ENCODE measurements at regions of chr5 and their contacts with region 1.

Region 1: GRCh38 chr5:13976867-13977830 is 32.7 kb upstream of the DNAH5 start:
- DNase-seq: peak; percentile 91
- ATAC-seq: peak; percentile 95
- H3K4me3 ChIP-seq: no peak overlapping the region
- H3K27ac ChIP-seq: no peak overlapping the region
- H3K4me1 ChIP-seq: peaks cover 5% of the 10 kb centered on the region
- H3K27me3 ChIP-seq: no peaks in the 10 kb centered on the region
- CTCF ChIP-seq: peak; percentile 91

Region 2: GRCh38 chr5:14351845-14352712 is 374.9 kb after region 1 on chr5:
- CTCF ChIA-PET with region 1: no interaction called
- POLR2A ChIA-PET with region 1: no interaction called
- intact Hi-C with region 1: loop called (anchors 5 kb)
- DNase-seq: peak; percentile 80
- ATAC-seq: peak; percentile 96
- H3K4me3 ChIP-seq: no peak overlapping the region
- H3K27ac ChIP-seq: no peak overlapping the region
- H3K4me1 ChIP-seq: no peaks in the 10 kb centered on the region
- H3K27me3 ChIP-seq: no peaks in the 10 kb centered on the region
- CTCF ChIP-seq: peak; percentile 98